Esophagus muscularis mucosa (tissue), 4 donors: ENCODE measurements at regions of chr1 and their contacts with region 1.

Region 1: GRCh38 chr1:220748089-220748934 is at the start of gene MTARC2:
- DNase-seq: peak; percentile 94
- H3K4me3 ChIP-seq: peak within 1 kb of the TSS; percentile 68 to 91 (median 84)
- H3K27ac ChIP-seq: peak within 1 kb of the TSS; percentile 88 to 95 (median 94)
- H3K4me1 ChIP-seq: peaks cover 36 to 61% (median 53%) of the 10 kb centered on the region in 4 donors
- H3K27me3 ChIP-seq: no peaks in the 10 kb centered on the region
- CTCF ChIP-seq: no peak
- EP300 ChIP-seq: no peak
- POLR2A ChIP-seq: peak; percentile 72
- total RNA-seq, gene MTARC2: 15.6 to 22.9 (median 20.5) TPM

Region 2: DNA sequence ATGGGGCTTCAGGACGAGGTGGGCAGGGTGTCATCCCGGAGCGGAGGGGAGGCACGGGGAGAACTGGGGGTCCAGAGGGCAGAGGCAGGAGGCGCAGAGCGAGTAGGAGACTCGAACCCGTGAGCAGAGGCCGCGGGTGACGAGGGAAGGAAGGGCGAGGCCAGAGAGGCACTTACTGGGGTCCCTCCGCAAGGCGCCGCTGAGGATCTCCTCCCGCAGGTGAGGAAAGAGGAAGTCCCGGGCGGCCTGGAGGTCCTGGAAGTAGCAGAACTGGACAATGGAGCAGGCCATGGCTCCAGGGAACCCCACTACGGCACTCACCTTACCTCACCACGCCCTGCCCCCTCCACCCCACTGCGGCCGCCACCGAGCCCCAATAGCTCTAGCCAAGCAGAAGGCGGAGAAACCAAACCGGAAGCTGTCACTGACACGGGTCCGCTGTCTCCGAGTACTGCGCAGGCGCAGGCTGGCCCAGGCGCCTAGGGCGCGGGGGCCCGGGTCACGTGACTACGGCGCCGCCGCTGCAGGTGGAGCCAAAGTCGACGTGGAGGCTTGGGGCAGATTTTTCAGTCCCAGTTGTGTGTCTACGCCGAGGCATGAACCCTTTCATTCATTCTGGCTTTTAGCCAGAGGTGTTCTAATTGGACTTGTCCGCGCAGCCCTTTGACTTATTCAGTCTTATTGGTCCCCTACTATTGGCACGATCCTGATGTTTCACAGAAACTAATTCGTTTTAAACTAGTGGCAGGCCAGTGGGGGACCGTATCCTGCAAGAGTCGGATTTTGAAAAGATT is 476.1 kb before region 1 on chr1 and contains the start of gene RAB3GAP2:
- intact Hi-C with region 1: loop called (anchors 10 kb)
- DNase-seq: peak; percentile 98
- H3K4me3 ChIP-seq: peak within 1 kb of the TSS; percentile 74 to 93 (median 81)
- H3K27ac ChIP-seq: peak within 1 kb of the TSS; percentile 84 to 89 (median 87)
- H3K4me1 ChIP-seq: peaks cover 26 to 37% (median 32%) of the 10 kb centered on the region in 4 donors
- H3K27me3 ChIP-seq: no peaks in the 10 kb centered on the region
- CTCF ChIP-seq: no peak
- EP300 ChIP-seq: no peak
- POLR2A ChIP-seq: peak; percentile 35
- total RNA-seq, gene RAB3GAP2: 19.8 to 23.0 (median 21.2) TPM

Region 3: DNA sequence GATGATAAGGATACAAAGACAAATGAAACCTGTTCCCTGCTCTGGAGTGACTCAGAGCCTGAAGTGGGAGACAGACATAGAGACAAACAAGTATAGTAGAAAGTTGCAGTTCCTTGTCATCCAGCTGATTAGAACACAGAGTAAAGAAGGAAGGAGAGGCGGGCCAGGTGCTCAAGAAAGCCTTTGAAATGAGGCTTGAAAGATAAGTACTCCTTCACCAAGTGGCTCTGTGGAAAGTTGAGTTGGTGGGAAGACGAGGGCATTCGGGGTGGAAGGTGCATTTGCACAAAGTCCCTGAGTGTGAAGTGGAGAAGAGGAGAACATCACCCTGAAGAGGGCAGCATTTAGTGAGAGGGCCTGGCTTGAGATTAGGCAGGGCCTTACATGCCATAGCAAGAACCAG is 203.4 kb before region 1 on chr1:
- intact Hi-C with region 1: no loop called
- DNase-seq: no peak
- H3K4me3 ChIP-seq: no peak overlapping the region
- H3K27ac ChIP-seq: no peak overlapping the region
- H3K4me1 ChIP-seq: no peaks in the 10 kb centered on the region
- H3K27me3 ChIP-seq: no peaks in the 10 kb centered on the region
- CTCF ChIP-seq: no peak
- EP300 ChIP-seq: no peak
- POLR2A ChIP-seq: no peak

Region 4: DNA sequence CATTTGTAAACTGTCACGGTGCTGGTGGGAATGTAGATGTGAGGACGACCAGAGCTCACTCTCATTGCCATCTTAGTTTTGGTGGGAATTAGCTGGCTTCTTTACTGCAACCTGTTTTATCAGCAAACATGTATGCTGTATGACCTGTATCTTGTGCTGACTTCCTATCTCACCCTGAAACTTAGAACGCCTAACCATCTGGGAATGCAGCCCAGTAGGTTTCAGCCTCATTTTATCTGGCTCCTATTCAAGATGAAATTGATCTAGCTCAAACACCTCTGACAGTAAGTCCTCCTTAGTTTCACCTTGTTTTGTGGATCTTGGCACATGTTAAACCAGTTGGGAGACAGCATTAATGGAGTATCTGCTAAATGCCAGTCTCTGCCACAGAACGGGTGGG is 305.6 kb after region 1 on chr1:
- intact Hi-C with region 1: no loop called
- DNase-seq: no peak
- H3K4me3 ChIP-seq: no peak overlapping the region
- H3K27ac ChIP-seq: no peak overlapping the region
- H3K4me1 ChIP-seq: no peaks in the 10 kb centered on the region
- H3K27me3 ChIP-seq: no peaks in the 10 kb centered on the region
- CTCF ChIP-seq: no peak
- EP300 ChIP-seq: no peak
- POLR2A ChIP-seq: no peak